ENCODE measurements at regions of chr20 and their contacts with region 1.

Region 1: GRCh38 chr20:43456809-43457639 is 672 bp upstream of the SRSF6 start:
- DNase-seq: peak; percentile 87 to 98 (median 94)

Region 2: DNA sequence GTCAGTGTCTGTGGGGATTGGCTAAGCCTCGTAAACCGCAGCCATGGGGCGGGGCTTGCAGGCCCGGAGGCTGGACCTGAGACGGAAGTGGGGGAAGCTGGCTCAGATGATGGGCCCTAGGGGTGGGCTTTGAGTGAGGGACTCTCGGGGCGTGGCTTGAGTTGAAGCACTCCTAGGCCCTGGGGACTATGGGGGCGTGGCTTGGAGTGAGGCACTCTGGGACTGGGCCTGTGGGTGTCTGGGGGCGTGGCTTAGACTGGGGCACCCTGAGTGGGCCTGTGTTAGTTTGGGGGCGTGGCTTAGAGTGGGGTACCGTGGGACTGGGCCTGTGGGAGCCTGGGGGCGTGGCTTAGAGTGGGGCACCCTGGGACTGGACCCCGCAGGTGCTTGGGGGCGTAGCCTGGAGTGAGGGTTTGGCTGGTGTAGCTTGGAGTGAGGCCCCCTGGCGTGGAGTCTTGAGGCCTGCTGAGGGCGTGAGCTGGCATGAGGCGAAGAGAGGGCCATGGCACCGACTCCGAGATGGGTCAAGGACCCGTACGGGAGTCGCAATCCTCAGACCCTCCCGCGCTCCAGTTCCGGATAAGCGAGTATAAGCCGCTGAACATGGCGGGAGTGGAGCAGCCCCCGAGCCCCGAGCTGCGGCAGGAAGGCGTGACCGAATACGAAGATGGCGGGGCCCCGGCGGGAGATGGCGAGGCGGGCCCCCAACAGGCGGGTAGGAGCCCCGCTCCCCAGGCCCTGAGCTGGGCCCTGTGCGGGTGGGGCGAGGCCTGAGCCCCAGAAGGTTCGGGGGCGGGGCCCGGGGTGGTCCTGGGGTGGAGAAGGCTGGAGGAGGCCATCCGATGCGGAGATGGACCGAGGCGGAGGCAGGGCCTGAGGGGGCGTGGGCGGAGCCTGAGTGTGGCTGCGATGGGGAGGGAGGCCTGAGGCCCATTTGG is 57.3 kb after region 1 on chr20:
- intact Hi-C with region 1: loop called (anchors 10 kb)
- DNase-seq: peak; percentile 89 to 100 (median 97)

Region 3: DNA sequence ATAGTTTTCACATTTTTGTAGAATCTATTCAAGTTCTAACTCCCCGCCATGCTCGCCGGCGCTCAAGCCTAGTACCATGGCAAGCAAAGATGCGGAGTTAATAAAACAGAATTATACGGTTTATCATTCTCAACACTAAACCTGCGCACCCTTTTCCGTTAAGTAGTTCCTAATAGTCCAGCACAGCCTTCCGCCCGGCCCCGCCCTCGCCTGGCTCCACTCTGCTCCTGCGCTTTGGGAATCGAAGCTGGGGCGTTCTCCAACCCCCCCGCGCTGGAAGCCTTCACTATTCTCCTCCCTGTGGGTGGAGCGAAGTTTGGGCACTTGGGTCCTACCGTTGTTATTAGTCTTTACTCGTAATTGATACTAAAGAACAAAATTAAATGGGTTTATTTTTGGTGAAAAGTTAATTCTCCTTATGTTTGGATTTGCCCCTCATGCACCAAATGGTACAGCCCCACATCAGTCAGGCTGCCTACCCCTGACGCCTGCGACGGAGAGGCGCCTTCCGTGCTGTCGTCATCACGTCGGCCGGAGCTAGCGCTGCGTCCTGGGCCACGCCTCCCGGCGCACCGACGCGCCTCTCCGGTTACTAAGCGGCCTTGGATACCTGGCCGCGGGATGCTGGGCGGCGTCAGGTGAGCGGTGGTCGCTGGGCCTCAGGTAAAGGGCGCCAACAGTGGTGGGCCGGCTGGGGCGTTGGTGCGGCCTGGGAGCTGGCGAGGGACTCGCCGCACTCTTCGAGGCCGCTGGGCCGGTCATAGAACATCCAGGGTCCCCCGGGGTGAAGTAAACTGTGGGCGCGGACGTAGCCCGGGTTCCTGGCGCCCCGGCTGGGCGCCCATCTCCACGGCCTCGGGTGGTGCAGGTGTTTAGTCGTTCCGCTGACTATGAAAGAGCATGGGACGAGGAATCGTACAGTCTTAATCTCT is 133.6 kb after region 1 on chr20 and contains the start of gene IFT52:
- intact Hi-C with region 1: loop called (anchors 5 kb)
- DNase-seq: peak; percentile 88 to 98 (median 94)